Activated CD4-positive, alpha-beta memory T cell treated with anti-CD3 and anti-CD28 coated beads for 36 hours (primary cell): ENCODE measurements at regions of chr3 and their contacts with region 1.

Region 1: GRCh38 chr3:98593046-98593936 is at the start of gene CPOX:
- DNase-seq: peak; percentile 93
- H3K4me3 Mint-ChIP-seq: peak within 1 kb of the TSS; percentile 98
- H3K27ac Mint-ChIP-seq: peak within 1 kb of the TSS; percentile 95
- H3K4me1 Mint-ChIP-seq: peaks cover 36% of the 10 kb centered on the region
- H3K27me3 Mint-ChIP-seq: no peaks in the 10 kb centered on the region
- total RNA-seq, gene CPOX: 36.0 to 39.2 TPM

Region 2: GRCh38 chr3:98522244-98523090 is 70.8 kb before region 1 on chr3 and contains the start of gene CLDND1:
- CTCF ChIA-PET with region 1: interaction called, 6 read pairs
- POLR2A ChIA-PET with region 1: interaction called, 13 read pairs
- intact Hi-C with region 1: loop called (anchors 1 kb)
- DNase-seq: peak; percentile 98
- H3K4me3 Mint-ChIP-seq: peak within 1 kb of the TSS; percentile 91
- H3K27ac Mint-ChIP-seq: peak within 1 kb of the TSS; percentile 86
- H3K4me1 Mint-ChIP-seq: peaks cover 66% of the 10 kb centered on the region
- H3K27me3 Mint-ChIP-seq: no peaks in the 10 kb centered on the region
- total RNA-seq, gene CLDND1: 199 to 208 TPM

Region 3: GRCh38 chr3:98563661-98564281 is 29.5 kb before region 1 on chr3:
- CTCF ChIA-PET with region 1: interaction called, 4 read pairs
- POLR2A ChIA-PET with region 1: no interaction called
- intact Hi-C with region 1: loop called (anchors 2 kb)
- DNase-seq: no peak
- H3K4me3 Mint-ChIP-seq: no peak overlapping the region
- H3K27ac Mint-ChIP-seq: peak overlapping the region; percentile 67
- H3K4me1 Mint-ChIP-seq: peaks cover 77% of the 10 kb centered on the region
- H3K27me3 Mint-ChIP-seq: peaks cover 3% of the 10 kb centered on the region

Region 4: DNA sequence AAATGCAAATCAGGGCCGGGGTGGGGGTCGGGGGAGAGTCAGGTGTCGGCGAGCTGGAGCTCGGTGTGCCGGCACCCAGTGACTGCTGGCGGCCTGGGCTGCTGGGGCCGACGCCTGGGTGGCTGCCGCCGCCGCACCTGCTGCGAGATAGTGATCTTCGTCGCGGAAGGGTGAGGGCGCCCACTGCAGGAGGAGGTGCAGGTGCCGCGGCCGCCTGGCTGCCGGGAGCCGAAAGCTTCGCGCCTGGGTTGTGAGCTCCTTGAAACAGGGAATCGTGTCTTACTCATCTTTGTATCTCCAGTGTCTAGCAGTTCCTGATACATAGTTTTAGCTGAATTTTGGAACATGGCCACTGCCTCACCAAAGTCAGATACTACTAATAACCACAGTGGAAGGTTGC is 64.2 kb after region 1 on chr3:
- CTCF ChIA-PET with region 1: interaction called, 10 read pairs
- POLR2A ChIA-PET with region 1: no interaction called
- intact Hi-C with region 1: no loop called
- DNase-seq: peak; percentile 60
- H3K4me3 Mint-ChIP-seq: no peak overlapping the region
- H3K27ac Mint-ChIP-seq: no peak overlapping the region
- H3K4me1 Mint-ChIP-seq: peaks cover 3% of the 10 kb centered on the region
- H3K27me3 Mint-ChIP-seq: peaks cover 16% of the 10 kb centered on the region

Region 5: GRCh38 chr3:98732286-98733052 is 139.2 kb after region 1 on chr3:
- CTCF ChIA-PET with region 1: interaction called, 3 read pairs
- POLR2A ChIA-PET with region 1: no interaction called
- intact Hi-C with region 1: loop called (anchors 5 kb)
- DNase-seq: peak; percentile 17
- H3K4me3 Mint-ChIP-seq: peak overlapping the region; percentile 52
- H3K27ac Mint-ChIP-seq: no peak overlapping the region
- H3K4me1 Mint-ChIP-seq: peaks cover 15% of the 10 kb centered on the region
- H3K27me3 Mint-ChIP-seq: peaks cover 55% of the 10 kb centered on the region

Region 6: GRCh38 chr3:98901392-98902350 is 308.4 kb after region 1 on chr3 and contains the start of gene DCBLD2:
- CTCF ChIA-PET with region 1: no interaction called
- POLR2A ChIA-PET with region 1: no interaction called
- intact Hi-C with region 1: loop called (anchors 1 kb)
- DNase-seq: peak; percentile 95
- H3K4me3 Mint-ChIP-seq: peak within 1 kb of the TSS; percentile 78
- H3K27ac Mint-ChIP-seq: no peak within 1 kb of the TSS
- H3K4me1 Mint-ChIP-seq: peaks cover 11% of the 10 kb centered on the region
- H3K27me3 Mint-ChIP-seq: peaks cover 5% of the 10 kb centered on the region
- total RNA-seq, gene DCBLD2: 1.2 to 1.6 TPM